Activated CD4-positive, alpha-beta memory T cell treated with anti-CD3 and anti-CD28 coated beads, Interleukin-2, amount 10 ng/mL, durations not matched to agents 7 days and 5 days (primary cell): ENCODE measurements at regions of chr12 and their contacts with region 1.

Region 1: GRCh38 chr12:57031138-57031725 is 14.9 kb upstream of the TAC3 start:
- DNase-seq: no peak
- H3K4me3 Mint-ChIP-seq: no peak overlapping the region
- H3K27ac Mint-ChIP-seq: no peak overlapping the region
- H3K4me1 Mint-ChIP-seq: peaks cover 23% of the 10 kb centered on the region
- H3K27me3 Mint-ChIP-seq: peaks cover under 1% of the 10 kb centered on the region

Region 2: DNA sequence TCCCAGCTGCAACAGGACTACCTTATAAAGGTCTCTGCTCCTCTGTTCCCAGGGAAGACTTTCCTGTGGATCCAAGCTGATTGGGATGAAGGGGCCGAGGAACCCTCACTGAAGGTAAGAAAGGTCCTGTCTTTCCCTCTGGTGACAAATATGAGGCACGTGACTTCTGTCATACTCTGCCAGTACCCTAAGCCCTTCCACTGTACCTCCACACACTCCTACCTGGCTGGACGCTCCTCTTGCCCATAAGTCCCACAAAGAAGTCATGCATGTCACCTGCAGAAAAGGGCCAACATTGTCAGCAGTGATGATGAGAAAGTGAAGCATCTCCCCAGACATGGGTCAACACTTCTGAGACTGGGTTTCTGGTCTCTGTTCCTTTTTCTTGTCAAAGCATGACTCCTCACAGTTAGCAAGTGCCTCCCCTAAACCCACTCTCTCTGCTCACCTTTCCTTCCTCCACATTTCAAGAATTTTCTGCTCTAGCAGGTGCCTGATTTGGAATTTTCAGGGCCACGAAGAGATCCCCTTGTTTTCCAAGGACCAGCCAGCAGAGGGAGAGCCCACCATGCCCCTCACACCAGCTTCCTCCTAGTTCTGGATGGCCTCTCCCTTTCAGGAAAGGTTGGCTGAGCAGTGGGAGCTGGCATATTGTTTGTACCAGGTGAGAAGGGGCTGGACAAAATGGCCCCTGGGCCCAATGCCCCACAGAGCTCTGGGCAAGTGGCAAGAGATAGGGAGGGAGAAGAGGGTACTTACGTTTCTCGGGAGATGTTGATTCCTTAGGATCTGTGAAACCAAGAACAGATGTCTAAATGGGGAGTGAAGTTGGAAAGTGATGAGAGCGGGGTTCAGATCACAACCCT is 18.4 kb before region 1 on chr12:
- CTCF ChIA-PET with region 1: interaction called, 6 read pairs
- POLR2A ChIA-PET with region 1: interaction called, 18 read pairs
- DNase-seq: no peak
- H3K4me3 Mint-ChIP-seq: no peak overlapping the region
- H3K27ac Mint-ChIP-seq: no peak overlapping the region
- H3K4me1 Mint-ChIP-seq: peaks cover 14% of the 10 kb centered on the region
- H3K27me3 Mint-ChIP-seq: peaks cover 22% of the 10 kb centered on the region

Region 3: GRCh38 chr12:57063991-57064685 is 32.9 kb after region 1 on chr12:
- CTCF ChIA-PET with region 1: interaction called, 13 read pairs
- POLR2A ChIA-PET with region 1: interaction called, 3 read pairs
- DNase-seq: peak; percentile 54
- H3K4me3 Mint-ChIP-seq: peak overlapping the region; percentile 62
- H3K27ac Mint-ChIP-seq: peak overlapping the region; percentile 89
- H3K4me1 Mint-ChIP-seq: peaks cover 35% of the 10 kb centered on the region
- H3K27me3 Mint-ChIP-seq: no peaks in the 10 kb centered on the region